ENCODE measurements at regions of chr12 and their contacts with region 1.

Region 1: GRCh38 chr12:11648831-11649702 is at the start of gene ETV6:
- DNase-seq: peak; percentile 88
- H3K4me3 ChIP-seq: peak within 1 kb of the TSS; percentile 81 to 91 (median 84)
- H3K27ac ChIP-seq: peak within 1 kb of the TSS; percentile 97 to 99 (median 98)
- H3K4me1 ChIP-seq: peaks cover 0 to 22% (median 22%) of the 10 kb centered on the region in 4 donors
- H3K27me3 ChIP-seq: no peaks in the 10 kb centered on the region
- CTCF ChIP-seq: no peak
- EP300 ChIP-seq: peak in 2 of 4 donors; percentile 52 to 73
- POLR2A ChIP-seq: no peak
- total RNA-seq, gene ETV6: 15.7 to 35.2 (median 23.6) TPM

Region 2: GRCh38 chr12:11085419-11085818 is 563.6 kb before region 1 on chr12:
- intact Hi-C with region 1: no loop called
- DNase-seq: no peak
- H3K4me3 ChIP-seq: no peak overlapping the region
- H3K27ac ChIP-seq: no peak overlapping the region
- H3K4me1 ChIP-seq: no peaks in the 10 kb centered on the region
- H3K27me3 ChIP-seq: no peaks in the 10 kb centered on the region
- CTCF ChIP-seq: no peak
- EP300 ChIP-seq: no peak
- POLR2A ChIP-seq: no peak

Region 3: DNA sequence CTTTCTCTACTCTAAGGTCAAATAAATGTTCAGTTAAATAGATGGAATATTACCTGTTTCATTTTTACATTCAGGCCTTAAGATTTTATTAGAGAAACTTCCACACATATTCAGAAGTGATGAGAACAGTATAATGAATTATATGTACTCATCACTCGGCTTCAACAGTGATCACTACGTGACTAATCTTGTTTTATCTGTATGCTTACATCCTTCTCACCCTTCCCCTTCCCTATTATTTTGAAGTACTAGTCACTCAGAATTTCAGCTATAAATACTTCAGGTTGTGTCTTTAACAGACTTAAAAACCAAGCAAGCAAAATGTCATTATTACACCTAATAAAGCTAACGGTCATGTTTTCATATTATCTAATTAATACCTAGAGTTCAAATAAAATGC is 35.3 kb after region 1 on chr12:
- intact Hi-C with region 1: no loop called
- DNase-seq: no peak
- H3K4me3 ChIP-seq: no peak overlapping the region
- H3K27ac ChIP-seq: peak overlapping the region in 3 of 4 donors; percentile 71 to 90 (median 87)
- H3K4me1 ChIP-seq: peaks cover 0 to 85% (median 73%) of the 10 kb centered on the region in 4 donors
- H3K27me3 ChIP-seq: no peaks in the 10 kb centered on the region
- CTCF ChIP-seq: no peak
- EP300 ChIP-seq: no peak
- POLR2A ChIP-seq: no peak

Region 4: GRCh38 chr12:11695321-11695720 is 46.3 kb after region 1 on chr12:
- intact Hi-C with region 1: loop called (anchors 2 kb)
- DNase-seq: peak; percentile 83
- H3K4me3 ChIP-seq: peak overlapping the region in 1 of 4 donors; percentile 0
- H3K27ac ChIP-seq: peak overlapping the region; percentile 50 to 90 (median 82)
- H3K4me1 ChIP-seq: peaks cover 0 to 85% (median 62%) of the 10 kb centered on the region in 4 donors
- H3K27me3 ChIP-seq: no peaks in the 10 kb centered on the region
- CTCF ChIP-seq: no peak
- EP300 ChIP-seq: no peak
- POLR2A ChIP-seq: no peak

Region 5: DNA sequence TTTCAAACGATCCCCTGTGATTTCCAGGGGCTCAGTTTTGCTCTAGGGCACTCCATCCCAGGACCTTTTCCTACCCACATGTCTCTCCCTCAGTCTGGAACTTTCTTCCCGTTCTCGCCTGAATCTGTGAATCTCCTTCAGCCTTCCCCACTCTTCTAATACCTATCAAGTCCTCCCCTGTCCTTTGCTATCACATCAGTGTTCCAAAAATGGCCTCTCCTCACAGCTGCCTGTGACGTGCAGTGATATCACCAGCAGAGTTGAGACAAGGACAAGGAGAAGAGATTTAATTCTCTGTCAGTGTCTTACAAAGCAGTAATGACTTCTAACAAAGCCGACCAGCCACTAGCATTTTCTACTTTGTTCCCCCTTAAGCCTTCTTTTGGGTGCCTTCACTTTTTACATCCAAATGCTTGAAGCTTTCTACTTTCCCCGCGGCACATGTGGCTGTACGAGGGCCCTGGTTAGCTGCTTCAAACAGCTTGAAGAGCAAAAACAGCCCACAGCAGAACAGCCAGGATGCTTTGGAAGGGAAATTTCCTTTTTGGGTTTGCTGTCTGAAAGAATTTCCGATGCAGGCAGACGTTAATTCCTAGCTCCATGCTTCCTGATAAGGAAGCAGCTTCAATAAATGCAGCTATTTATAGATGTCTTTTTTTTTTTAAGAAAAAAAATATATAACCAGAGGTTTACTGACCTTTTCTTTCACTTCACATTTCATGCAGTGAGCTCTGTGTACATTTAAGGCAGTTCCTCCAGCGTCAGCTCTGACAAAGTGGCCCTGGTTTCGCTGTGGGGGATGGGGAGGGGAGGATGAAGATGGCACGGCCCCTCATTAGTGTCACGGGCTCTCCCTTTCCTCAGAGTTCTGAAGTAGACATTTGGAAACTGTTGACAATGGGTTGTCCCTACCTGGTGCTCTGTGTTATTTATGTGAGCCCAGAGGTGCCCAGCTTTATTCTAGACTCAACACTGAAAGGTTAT is 109.7 kb after region 1 on chr12:
- intact Hi-C with region 1: loop called (anchors 2 kb)
- DNase-seq: no peak
- H3K4me3 ChIP-seq: no peak overlapping the region
- H3K27ac ChIP-seq: peak overlapping the region; percentile 82 to 92 (median 90)
- H3K4me1 ChIP-seq: peaks cover 0 to 96% (median 83%) of the 10 kb centered on the region in 4 donors
- H3K27me3 ChIP-seq: no peaks in the 10 kb centered on the region
- CTCF ChIP-seq: no peak
- EP300 ChIP-seq: peak in 2 of 4 donors; percentile 46 to 68
- POLR2A ChIP-seq: no peak

Region 6: GRCh38 chr12:11877869-11878780 is 229.1 kb after region 1 on chr12:
- intact Hi-C with region 1: loop called (anchors 5 kb)
- DNase-seq: peak; percentile 81
- H3K4me3 ChIP-seq: peak overlapping the region in 1 of 4 donors; percentile 5
- H3K27ac ChIP-seq: peak overlapping the region; percentile 72 to 88 (median 76)
- H3K4me1 ChIP-seq: peaks cover 0 to 71% (median 54%) of the 10 kb centered on the region in 4 donors
- H3K27me3 ChIP-seq: no peaks in the 10 kb centered on the region
- CTCF ChIP-seq: no peak
- EP300 ChIP-seq: no peak
- POLR2A ChIP-seq: no peak

Region 7: DNA sequence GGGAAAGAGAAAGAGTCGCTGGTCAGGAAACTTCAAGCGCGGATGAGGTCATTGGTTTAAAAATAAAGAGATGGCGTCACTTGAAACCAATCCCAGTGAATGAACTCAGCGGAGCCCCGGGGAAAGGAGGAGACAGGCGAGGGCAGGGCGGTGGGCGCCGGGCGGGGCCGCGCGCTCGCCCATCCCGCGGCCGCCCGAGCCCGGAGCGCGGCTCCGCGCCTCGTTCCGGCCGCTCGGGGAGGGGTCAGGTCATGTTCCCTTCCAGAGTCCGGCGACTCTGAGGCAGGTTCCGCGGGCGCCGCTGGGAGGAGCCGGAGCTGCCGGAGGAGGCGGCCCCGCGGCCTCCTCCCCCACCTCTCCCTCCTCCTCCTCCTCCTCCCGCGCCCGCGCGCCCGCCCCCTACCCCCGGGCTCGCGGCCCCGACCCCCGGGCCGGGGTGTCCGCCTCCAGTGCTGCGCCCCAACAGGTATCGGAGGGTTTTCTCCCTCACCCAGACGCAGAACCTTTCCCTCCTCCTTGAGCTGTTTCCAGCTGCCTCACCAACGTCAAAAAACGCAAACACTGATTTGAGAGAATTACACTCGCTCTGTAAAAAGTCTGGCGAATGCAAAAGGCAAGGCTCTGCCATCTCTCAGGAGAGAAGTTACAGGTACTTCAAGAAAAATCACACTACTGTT is 913.7 kb after region 1 on chr12 and contains the start of gene DUSP16:
- intact Hi-C with region 1: loop called (anchors 5 kb)
- DNase-seq: peak; percentile 94
- H3K4me3 ChIP-seq: peak within 1 kb of the TSS; percentile 88 to 96 (median 92)
- H3K27ac ChIP-seq: peak within 1 kb of the TSS; percentile 96 to 100 (median 100)
- H3K4me1 ChIP-seq: peaks cover 0 to 40% (median 25%) of the 10 kb centered on the region in 4 donors
- H3K27me3 ChIP-seq: no peaks in the 10 kb centered on the region
- CTCF ChIP-seq: no peak
- EP300 ChIP-seq: no peak
- POLR2A ChIP-seq: no peak
- total RNA-seq, gene DUSP16: 8.6 to 13.8 (median 11.2) TPM